Activated T-helper 2 cell treated with anti-CD3 and anti-CD28 coated beads, Interferon-gamma antibody, Interleukin-2, Interleukin-4, amounts not matched to agents 10 μg/mL and 5 μg/mL and 100 μg/mL, durations not matched to agents 14 hours and 24 hours and 36 hours (primary cell): ENCODE measurements at regions of chr1 and their contacts with region 1.

Region 1: GRCh38 chr1:153633716-153634665 is at the start of gene CHTOP:
- DNase-seq: peak; percentile 96
- H3K4me3 Mint-ChIP-seq: peak within 1 kb of the TSS; percentile 96
- H3K27ac Mint-ChIP-seq: peak within 1 kb of the TSS; percentile 100
- H3K4me1 Mint-ChIP-seq: peaks cover 28% of the 10 kb centered on the region
- H3K27me3 Mint-ChIP-seq: no peaks in the 10 kb centered on the region
- total RNA-seq, gene CHTOP: 94.6 and 98.7 TPM in 2 replicates

Region 2: GRCh38 chr1:153563483-153563901 is 70.5 kb before region 1 on chr1:
- intact Hi-C with region 1: no loop called
- DNase-seq: no peak
- H3K4me3 Mint-ChIP-seq: no peak overlapping the region
- H3K27ac Mint-ChIP-seq: no peak overlapping the region
- H3K4me1 Mint-ChIP-seq: peaks cover 25% of the 10 kb centered on the region
- H3K27me3 Mint-ChIP-seq: no peaks in the 10 kb centered on the region

Region 3: DNA sequence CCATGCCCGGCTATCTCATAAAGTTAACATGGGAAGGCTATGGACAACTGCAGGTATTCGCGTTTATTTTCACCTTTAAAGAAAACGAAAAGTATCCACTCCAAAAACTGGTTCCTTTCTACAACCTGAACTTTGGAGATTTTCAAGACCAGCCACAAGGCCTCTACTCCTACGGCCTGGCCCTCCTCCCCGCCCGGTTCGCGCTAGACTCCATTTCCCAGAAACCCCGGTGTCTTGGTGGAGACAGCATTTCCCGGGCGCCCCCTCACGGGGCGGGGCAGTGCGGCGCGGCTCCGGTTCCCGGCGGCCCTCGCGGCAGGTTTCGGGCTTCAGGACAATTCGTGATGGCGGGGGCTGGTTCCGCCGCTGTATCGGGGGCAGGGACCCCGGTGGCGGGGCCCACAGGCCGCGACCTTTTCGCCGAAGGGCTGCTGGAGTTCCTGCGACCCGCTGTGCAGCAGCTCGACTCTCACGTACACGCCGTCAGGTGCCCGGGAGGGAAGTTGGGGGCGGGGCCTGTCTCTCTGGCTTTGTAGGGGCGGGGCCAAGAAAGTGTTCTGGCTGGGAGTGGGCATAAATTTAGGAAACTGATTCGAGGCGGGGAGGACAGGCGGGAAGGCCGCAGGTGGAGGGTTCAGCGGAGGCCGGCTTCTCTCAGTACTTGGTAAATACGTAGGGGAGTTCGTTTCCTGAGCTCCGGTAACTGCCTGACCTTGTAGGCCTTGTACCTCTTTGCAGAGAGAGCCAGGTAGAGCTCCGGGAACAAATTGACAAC is 24.6 kb after region 1 on chr1 and contains the start of gene SNAPIN:
- intact Hi-C with region 1: loop called (anchors 1 kb)
- DNase-seq: peak; percentile 90
- H3K4me3 Mint-ChIP-seq: peak within 1 kb of the TSS; percentile 96
- H3K27ac Mint-ChIP-seq: peak within 1 kb of the TSS; percentile 70
- H3K4me1 Mint-ChIP-seq: peaks cover 12% of the 10 kb centered on the region
- H3K27me3 Mint-ChIP-seq: no peaks in the 10 kb centered on the region
- total RNA-seq, gene SNAPIN: 32.8 and 33.1 TPM in 2 replicates

Region 4: GRCh38 chr1:153698020-153698931 is 64.3 kb after region 1 on chr1:
- intact Hi-C with region 1: no loop called
- DNase-seq: no peak
- H3K4me3 Mint-ChIP-seq: no peak overlapping the region
- H3K27ac Mint-ChIP-seq: no peak overlapping the region
- H3K4me1 Mint-ChIP-seq: no peaks in the 10 kb centered on the region
- H3K27me3 Mint-ChIP-seq: no peaks in the 10 kb centered on the region

Region 5: DNA sequence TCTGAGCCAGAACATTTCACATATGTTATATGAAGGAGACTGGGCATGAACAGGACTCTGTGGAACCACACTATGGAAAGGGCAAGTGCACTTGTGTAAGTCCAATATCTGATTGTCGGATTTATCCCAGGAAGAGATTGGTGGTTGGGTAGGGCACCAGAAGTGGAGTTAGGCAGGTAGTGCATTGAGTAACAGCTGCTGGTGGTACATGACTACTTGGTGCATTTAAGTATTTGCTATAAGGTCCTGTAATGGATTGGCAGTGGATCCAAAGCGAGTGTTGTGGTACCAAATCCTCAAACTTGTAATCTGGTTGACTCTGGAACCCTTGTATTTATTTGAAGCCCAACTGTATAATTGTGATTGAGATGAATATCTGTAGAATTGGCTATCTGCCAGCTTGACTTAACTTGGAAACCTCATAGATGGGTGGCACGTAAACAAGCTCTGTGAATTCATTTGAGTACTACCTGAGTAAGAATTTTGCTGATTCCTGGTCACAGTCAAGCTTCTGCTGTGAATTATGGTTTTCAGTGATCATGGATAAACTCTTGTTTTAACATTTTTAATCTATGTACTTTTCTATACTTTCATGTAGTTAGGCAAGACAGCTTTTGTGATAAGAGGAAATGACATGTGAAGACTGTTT is 607.8 kb after region 1 on chr1:
- intact Hi-C with region 1: no loop called
- DNase-seq: no peak
- H3K4me3 Mint-ChIP-seq: no peak overlapping the region
- H3K27ac Mint-ChIP-seq: peak overlapping the region; percentile 72
- H3K4me1 Mint-ChIP-seq: peaks cover 17% of the 10 kb centered on the region
- H3K27me3 Mint-ChIP-seq: no peaks in the 10 kb centered on the region